HCT116 (cell line): ENCODE measurements at regions of chr3 and their contacts with region 1.

Region 1: DNA sequence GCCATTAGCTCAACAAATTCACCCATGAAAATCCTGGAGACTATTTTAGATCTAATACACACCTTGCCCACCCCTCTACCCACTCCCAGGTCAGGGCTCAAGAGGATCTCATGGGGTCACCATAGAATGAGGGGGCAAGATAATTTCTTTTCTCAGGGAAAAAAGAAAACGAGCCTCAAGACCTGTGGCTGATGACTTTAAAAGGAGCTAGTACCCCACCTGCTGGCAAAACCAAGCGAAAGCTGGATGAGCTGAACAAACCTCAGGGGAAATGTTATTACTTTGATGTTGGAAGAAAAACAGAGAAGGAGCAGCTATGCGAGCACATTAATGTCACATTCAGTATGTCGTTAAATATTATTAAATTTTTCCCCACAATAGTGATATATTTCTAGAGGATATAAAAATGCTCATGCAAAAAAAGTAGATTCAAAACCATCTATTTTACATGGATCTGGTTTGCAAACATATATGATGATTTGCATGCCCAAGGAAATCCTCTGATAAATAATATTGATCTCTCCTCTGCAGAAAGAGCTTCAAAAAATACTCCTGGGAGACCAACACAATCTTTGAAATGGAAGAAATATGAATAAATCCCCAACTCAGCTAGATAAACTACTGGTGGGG is 37.7 kb downstream of the PLD1 start:
- DNase-seq: peak; percentile 52
- ATAC-seq: peak; percentile 76
- H3K4me3 ChIP-seq: no peak overlapping the region
- H3K27ac ChIP-seq: no peak overlapping the region
- H3K4me1 ChIP-seq: 0 out of 4 replicates have a peak, but pooled peaks cover 0 to 5% of the 10 kb centered on the region in 2 experiments
- H3K27me3 ChIP-seq: no peaks in the 10 kb centered on the region
- CTCF ChIP-seq: peak; percentile 68 to 77 (median 72); a peak in 5 of 6 replicates
- POLR2A ChIP-seq: no peak
- RAD21 ChIP-seq: peak; percentile 85

Region 2: DNA sequence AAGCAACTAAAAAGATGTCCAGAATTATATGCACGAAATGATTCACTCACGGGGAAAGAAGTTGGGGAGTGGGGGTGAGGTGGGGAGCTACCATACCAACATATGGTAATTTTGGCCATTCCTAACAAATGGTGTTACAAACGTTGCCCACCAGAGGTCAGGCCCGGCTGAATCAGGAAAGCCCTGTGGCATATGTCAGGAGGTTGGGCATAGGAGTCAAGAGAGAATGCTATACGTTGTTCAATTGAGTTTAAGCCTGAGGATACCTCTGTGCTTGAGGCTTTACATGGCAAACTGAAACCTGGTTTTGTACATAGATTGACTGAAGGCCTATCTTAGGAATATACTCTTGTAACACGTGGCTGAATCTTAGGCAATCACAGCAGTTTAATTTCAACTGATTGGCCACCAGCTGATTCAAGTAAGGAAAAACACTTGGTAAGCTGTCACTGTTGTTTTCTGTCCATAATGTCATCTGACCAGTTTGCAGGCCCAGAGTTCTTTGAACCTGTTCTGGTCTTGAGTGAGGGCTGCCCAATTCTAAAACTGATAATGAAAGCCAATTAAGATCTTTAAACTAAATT is 722.6 kb before region 1 on chr3:
- CTCF ChIA-PET with region 1: interaction called, 20 read pairs
- POLR2A ChIA-PET with region 1: interaction called, 3 read pairs
- RAD21 ChIA-PET with region 1: interaction called in 1 of 2 experiments, 3 read pairs
- intact Hi-C with region 1: loop called (anchors 10 kb)
- DNase-seq: peak; percentile 45
- ATAC-seq: peak; percentile 96
- H3K4me3 ChIP-seq: no peak overlapping the region
- H3K27ac ChIP-seq: no peak overlapping the region
- H3K4me1 ChIP-seq: peaks cover under 1 to 4% of the 10 kb centered on the region in 2 experiments
- H3K27me3 ChIP-seq: no peaks in the 10 kb centered on the region
- CTCF ChIP-seq: peak; percentile 62 to 77 (median 68); a peak in 5 of 6 replicates
- POLR2A ChIP-seq: no peak
- RAD21 ChIP-seq: peak; percentile 90

Region 3: GRCh38 chr3:171614318-171614921 is 158.1 kb before region 1 on chr3:
- CTCF ChIA-PET with region 1: interaction called, 10 read pairs
- POLR2A ChIA-PET with region 1: no interaction called
- RAD21 ChIA-PET with region 1: interaction called in 1 of 2 experiments, 5 read pairs
- intact Hi-C with region 1: no loop called
- DNase-seq: no peak
- ATAC-seq: peak; percentile 54; the same call in 1 of the 2 replicates
- H3K4me3 ChIP-seq: no peak overlapping the region
- H3K27ac ChIP-seq: no peak overlapping the region
- H3K4me1 ChIP-seq: no peaks in the 10 kb centered on the region
- H3K27me3 ChIP-seq: no peaks in the 10 kb centered on the region
- CTCF ChIP-seq: peak; percentile 8 to 49 (median 48); a peak in 4 of 6 replicates
- POLR2A ChIP-seq: no peak
- RAD21 ChIP-seq: peak; percentile 39

Region 4: GRCh38 chr3:171703756-171704401 is 68.7 kb before region 1 on chr3:
- CTCF ChIA-PET with region 1: interaction called, 6 read pairs
- POLR2A ChIA-PET with region 1: interaction called, 5 read pairs
- RAD21 ChIA-PET with region 1: no interaction called
- intact Hi-C with region 1: loop called (anchors 5 kb)
- DNase-seq: peak; percentile 28
- ATAC-seq: peak; percentile 94
- H3K4me3 ChIP-seq: no peak overlapping the region
- H3K27ac ChIP-seq: no peak overlapping the region
- H3K4me1 ChIP-seq: no peaks in the 10 kb centered on the region
- H3K27me3 ChIP-seq: no peaks in the 10 kb centered on the region
- CTCF ChIP-seq: peak; percentile 64 to 76 (median 73); a peak in 5 of 6 replicates
- POLR2A ChIP-seq: no peak
- RAD21 ChIP-seq: peak; percentile 59

Region 5: DNA sequence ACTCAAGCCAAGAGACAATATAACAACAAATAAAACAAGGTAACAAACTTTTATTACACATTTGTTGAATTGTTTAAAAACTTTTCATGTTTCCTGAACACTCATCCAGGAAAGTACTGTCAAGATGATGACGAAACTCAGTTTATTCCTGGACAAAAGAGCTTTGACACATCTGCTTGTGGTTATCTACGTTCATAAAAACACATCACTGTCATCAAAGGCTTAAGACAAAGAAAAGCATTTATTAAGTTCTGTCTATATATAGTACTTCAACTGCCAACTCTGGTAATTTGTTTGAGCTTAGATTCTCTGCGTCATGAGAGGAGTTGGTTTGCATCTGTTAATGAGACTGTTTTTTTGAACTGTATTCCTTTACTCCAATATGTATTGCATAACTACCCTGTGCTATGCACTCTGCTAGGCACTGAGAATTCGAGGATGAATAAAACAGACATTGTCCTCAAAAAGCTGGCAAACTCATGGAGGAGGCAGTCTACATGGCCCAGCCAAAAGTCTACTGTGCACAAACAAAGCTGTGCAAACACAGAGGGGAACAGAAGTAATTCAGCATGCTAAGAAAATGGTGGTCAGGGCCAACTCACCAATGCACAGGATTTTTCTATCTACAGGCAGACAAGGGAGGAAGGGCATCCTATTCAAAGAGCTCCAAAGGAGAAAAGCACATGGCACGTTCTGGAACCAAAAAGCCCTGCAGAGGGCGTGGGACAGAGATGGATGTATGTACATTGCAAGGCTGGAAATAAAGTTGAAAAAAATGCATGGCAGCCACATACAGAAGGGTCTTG is 16.2 kb after region 1 on chr3:
- CTCF ChIA-PET with region 1: interaction called, 10 read pairs
- POLR2A ChIA-PET with region 1: no interaction called
- RAD21 ChIA-PET with region 1: no interaction called
- intact Hi-C with region 1: no loop called
- DNase-seq: no peak
- ATAC-seq: peak; percentile 46
- H3K4me3 ChIP-seq: no peak overlapping the region
- H3K27ac ChIP-seq: no peak overlapping the region
- H3K4me1 ChIP-seq: peaks cover 4 to 21% of the 10 kb centered on the region in 2 experiments; a peak in 3 of 4 replicates
- H3K27me3 ChIP-seq: no peaks in the 10 kb centered on the region
- CTCF ChIP-seq: 0 out of 6 replicates have a peak, but pooled peaks of 2 of the 3 experiments have one; percentile 9
- POLR2A ChIP-seq: no peak
- RAD21 ChIP-seq: peak; percentile 15; the same call in 1 of the 2 replicates